OCI-LY7 (cell line): ENCODE measurements at regions of chr14 and their contacts with region 1.

Region 1: GRCh38 chr14:22918804-22919600 is at the start of gene RBM23:
- DNase-seq: peak; percentile 100
- H3K4me3 ChIP-seq: peak within 1 kb of the TSS; percentile 82
- H3K27ac ChIP-seq: peak within 1 kb of the TSS; percentile 78
- H3K4me1 ChIP-seq: peaks cover 36% of the 10 kb centered on the region
- CTCF ChIP-seq: no peak
- total RNA-seq, gene RBM23: 81.0 and 106 TPM in 2 replicates

Region 2: GRCh38 chr14:22715186-22715812 is 203.7 kb before region 1 on chr14:
- CTCF ChIA-PET with region 1: no interaction called
- POLR2A ChIA-PET with region 1: no interaction called
- intact Hi-C with region 1: no loop called
- DNase-seq: no peak
- H3K4me3 ChIP-seq: no peak overlapping the region
- H3K27ac ChIP-seq: no peak overlapping the region
- H3K4me1 ChIP-seq: peaks cover 13% of the 10 kb centered on the region
- CTCF ChIP-seq: no peak

Region 3: GRCh38 chr14:22872033-22872832 is 46.8 kb before region 1 on chr14:
- CTCF ChIA-PET with region 1: no interaction called
- POLR2A ChIA-PET with region 1: interaction called, 7 read pairs
- intact Hi-C with region 1: loop called (anchors 5 kb)
- DNase-seq: peak; percentile 80
- H3K4me3 ChIP-seq: peak overlapping the region; percentile 86
- H3K27ac ChIP-seq: peak overlapping the region; percentile 93
- H3K4me1 ChIP-seq: peaks cover 31% of the 10 kb centered on the region
- CTCF ChIP-seq: peak; percentile 98

Region 4: DNA sequence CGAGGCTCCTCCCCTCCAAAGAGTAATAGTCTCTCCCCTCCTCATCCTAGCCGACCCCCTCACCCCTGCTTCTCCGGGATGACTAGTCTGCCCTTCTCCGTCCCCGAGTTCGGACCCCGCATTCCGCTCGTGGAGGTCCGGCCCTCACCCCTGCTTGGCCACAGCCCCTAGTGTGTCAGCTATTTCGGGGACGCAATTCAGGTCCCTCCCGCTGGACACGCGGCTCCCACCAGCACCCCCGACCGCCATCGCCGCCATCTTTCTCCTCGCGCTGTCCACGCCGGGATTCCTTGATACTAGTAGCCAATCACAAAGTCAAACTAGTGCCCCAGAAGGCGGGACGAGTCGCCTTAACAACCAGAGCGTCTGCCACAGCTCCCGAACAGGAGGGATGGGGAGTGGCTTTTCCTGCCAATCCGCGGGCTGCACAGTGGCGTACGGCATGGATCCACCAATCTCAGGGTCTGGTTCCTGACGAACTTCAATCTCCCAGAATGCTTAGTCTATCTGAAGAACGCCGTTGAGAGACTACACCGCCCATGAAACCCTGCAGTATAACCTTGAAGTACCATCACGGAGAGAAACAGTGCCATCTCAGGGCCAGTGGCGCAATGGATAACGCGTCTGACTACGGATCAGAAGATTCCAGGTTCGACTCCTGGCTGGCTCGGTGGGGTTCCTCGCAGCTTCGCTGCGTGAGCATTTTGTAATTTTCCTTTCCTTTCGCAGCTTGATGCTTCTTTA is 10.3 kb after region 1 on chr14 and contains the start of gene PRMT5:
- CTCF ChIA-PET with region 1: interaction called, 5 read pairs
- POLR2A ChIA-PET with region 1: interaction called, 61 read pairs
- intact Hi-C with region 1: no loop called
- DNase-seq: peak; percentile 99
- H3K4me3 ChIP-seq: peak within 1 kb of the TSS; percentile 91
- H3K27ac ChIP-seq: peak within 1 kb of the TSS; percentile 70
- H3K4me1 ChIP-seq: peaks cover 32% of the 10 kb centered on the region
- CTCF ChIP-seq: no peak
- total RNA-seq, gene PRMT5: 82.2 and 93.1 TPM in 2 replicates

Region 5: DNA sequence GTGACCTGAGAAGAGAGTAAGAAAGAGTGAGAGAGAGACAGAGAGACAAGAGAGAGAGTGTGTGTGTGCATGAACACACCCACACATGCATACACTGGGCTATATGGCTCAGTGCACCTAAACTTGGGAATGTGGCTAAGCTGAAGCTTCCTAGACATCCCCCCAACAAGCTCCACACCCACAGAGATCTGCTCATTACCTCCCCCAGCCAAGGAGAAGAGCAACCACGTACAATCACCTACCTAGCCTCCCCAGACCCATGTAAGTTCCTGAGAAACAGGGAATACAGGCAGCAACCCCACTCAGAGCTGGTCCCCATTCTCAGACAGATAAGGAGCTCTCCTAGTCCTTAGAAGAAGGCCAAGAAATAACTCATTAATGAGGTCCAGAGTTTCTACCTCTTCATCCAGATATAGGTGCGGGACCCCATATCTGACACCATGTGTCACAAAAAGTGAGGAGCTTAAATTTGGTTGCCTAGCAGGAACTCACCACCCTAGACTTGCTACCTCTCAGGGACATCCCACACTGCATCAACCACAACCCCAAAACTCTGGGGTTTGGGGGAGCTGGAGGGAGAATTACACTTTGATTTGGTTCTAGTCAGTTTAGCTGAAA is 53.4 kb after region 1 on chr14:
- CTCF ChIA-PET with region 1: no interaction called
- POLR2A ChIA-PET with region 1: no interaction called
- intact Hi-C with region 1: no loop called
- DNase-seq: no peak
- H3K4me3 ChIP-seq: no peak overlapping the region
- H3K27ac ChIP-seq: no peak overlapping the region
- H3K4me1 ChIP-seq: peaks cover 15% of the 10 kb centered on the region
- CTCF ChIP-seq: no peak

Region 6: GRCh38 chr14:23095196-23096108 is 176.4 kb after region 1 on chr14 and contains the start of gene C14orf119:
- CTCF ChIA-PET with region 1: no interaction called
- POLR2A ChIA-PET with region 1: no interaction called
- intact Hi-C with region 1: no loop called
- DNase-seq: peak; percentile 100
- H3K4me3 ChIP-seq: peak within 1 kb of the TSS; percentile 92
- H3K27ac ChIP-seq: peak within 1 kb of the TSS; percentile 81
- H3K4me1 ChIP-seq: peaks cover 23% of the 10 kb centered on the region
- CTCF ChIP-seq: no peak
- total RNA-seq, gene C14orf119: 25.9 and 44.5 TPM in 2 replicates

Region 7: GRCh38 chr14:23209651-23210423 is 290.8 kb after region 1 on chr14:
- CTCF ChIA-PET with region 1: no interaction called
- POLR2A ChIA-PET with region 1: no interaction called
- intact Hi-C with region 1: no loop called
- DNase-seq: no peak
- H3K4me3 ChIP-seq: no peak overlapping the region
- H3K27ac ChIP-seq: no peak overlapping the region
- H3K4me1 ChIP-seq: no peaks in the 10 kb centered on the region
- CTCF ChIP-seq: no peak